ENCODE measurements at regions of chr15 and their contacts with region 1.

Region 1: GRCh38 chr15:74307827-74308644 is 59.4 kb downstream of the CYP11A1 start:
- DNase-seq: peak in 1 of 2 donors; percentile 74
- H3K4me3 ChIP-seq: no peak overlapping the region
- H3K27ac ChIP-seq: no peak overlapping the region
- H3K4me1 ChIP-seq: no peaks in the 10 kb centered on the region
- H3K27me3 ChIP-seq: no peaks in the 10 kb centered on the region
- CTCF ChIP-seq: peak; percentile 61 to 89 (median 69)

Region 2: GRCh38 chr15:73950831-73951561 is 357.0 kb before region 1 on chr15:
- intact Hi-C with region 1: loop called (anchors 10 kb)
- DNase-seq: peak; percentile 94 to 99
- H3K4me3 ChIP-seq: peak overlapping the region in 1 of 2 donors; percentile 30
- H3K27ac ChIP-seq: peak overlapping the region; percentile 99 to 100
- H3K4me1 ChIP-seq: peaks cover 9 to 35% of the 10 kb centered on the region in 2 donors
- H3K27me3 ChIP-seq: no peaks in the 10 kb centered on the region
- CTCF ChIP-seq: peak; percentile 80 to 95 (median 81)

Region 3: GRCh38 chr15:74053941-74054529 is 254.0 kb before region 1 on chr15:
- intact Hi-C with region 1: loop called (anchors 10 kb)
- DNase-seq: peak in 1 of 2 donors; percentile 86
- H3K4me3 ChIP-seq: peak overlapping the region; percentile 15 to 32
- H3K27ac ChIP-seq: peak overlapping the region; percentile 94 to 97
- H3K4me1 ChIP-seq: peaks cover 28 to 46% of the 10 kb centered on the region in 2 donors
- H3K27me3 ChIP-seq: no peaks in the 10 kb centered on the region
- CTCF ChIP-seq: peak; percentile 47 to 83 (median 82)

Region 4: DNA sequence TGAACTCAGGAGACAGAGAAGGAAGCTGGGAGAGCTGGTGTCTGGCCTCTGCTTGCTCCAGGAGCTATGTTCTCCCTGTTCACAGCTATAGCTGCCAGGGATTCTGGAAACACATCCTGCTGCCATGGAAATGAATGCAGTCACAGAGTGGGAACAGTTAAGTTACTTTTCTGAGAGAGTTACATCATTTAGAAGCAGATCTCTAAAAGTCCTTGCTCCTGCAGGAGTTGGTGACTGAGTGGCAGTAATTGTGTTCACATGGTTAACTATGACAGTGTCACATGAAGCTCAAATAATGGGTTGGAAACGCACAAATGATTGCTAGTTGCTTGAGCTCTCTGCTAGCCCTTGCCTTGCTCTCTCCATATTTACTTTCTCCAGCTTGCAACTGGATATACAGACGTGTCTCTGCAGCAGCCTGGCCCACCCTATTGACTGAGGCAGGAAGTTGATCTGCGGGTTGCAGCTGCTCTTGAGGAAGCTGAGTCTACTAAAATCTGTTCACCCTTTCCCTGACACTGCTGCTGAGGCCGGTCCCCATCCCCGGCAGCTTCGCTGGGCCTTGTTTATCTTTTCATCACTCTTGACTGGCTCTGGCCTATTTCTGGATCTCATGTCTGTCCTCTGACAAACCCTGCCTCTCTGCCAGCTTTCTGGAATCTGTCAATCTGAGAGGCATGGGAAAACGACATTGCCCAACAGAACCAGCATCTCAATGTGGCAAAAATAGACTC is 151.2 kb before region 1 on chr15:
- intact Hi-C with region 1: no loop called
- DNase-seq: peak in 1 of 2 donors; percentile 80
- H3K4me3 ChIP-seq: no peak overlapping the region
- H3K27ac ChIP-seq: peak overlapping the region; percentile 59 to 72
- H3K4me1 ChIP-seq: peaks cover 3 to 25% of the 10 kb centered on the region in 2 donors
- H3K27me3 ChIP-seq: no peaks in the 10 kb centered on the region
- CTCF ChIP-seq: no peak

Measured in ascending aorta (tissue), 2 donors.